PC-9 (cell line): ENCODE measurements at regions of chr10 and their contacts with region 1.

Region 1: DNA sequence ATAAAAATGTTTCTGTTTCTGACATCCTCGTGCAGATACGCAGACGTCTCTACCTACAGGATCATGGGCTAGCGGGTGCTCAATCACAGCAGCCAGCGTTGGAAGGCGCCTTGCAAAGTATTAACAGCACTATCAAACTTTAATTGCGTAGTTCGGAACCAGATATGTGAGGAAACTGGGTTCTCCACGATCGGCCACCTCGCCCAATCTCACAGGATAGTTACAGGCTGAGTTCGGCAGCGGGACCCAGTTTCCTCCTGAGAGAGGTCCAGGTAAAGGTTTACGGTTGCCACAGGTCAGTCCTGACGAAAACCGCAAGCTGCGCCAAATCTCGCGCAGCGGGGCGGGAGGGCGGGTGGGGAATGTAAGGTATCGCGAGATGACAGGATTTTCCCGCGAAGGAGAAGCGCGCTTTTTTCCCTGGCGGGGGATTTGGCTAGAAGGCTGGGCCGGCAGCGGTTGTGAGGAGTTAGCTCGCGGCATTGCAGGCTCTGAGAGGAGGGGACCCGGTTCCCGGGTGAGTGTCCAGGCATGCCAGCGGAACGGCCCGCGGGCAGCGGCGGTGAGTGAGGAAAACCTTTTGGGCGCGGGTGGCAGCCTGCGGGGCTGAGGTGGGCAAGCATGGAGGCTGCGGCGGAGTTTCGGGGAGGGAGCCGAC is at the start of gene HELLS:
- DNase-seq: peak; percentile 59 to 72
- H3K4me3 ChIP-seq: peak within 1 kb of the TSS; percentile 97
- H3K27ac ChIP-seq: peak within 1 kb of the TSS; percentile 78
- H3K4me1 ChIP-seq: peaks cover 22% of the 10 kb centered on the region
- H3K27me3 ChIP-seq: no peaks in the 10 kb centered on the region
- CTCF ChIP-seq: no peak
- total RNA-seq, gene HELLS: 50.8 and 64.4 TPM in 2 replicates

Region 2: DNA sequence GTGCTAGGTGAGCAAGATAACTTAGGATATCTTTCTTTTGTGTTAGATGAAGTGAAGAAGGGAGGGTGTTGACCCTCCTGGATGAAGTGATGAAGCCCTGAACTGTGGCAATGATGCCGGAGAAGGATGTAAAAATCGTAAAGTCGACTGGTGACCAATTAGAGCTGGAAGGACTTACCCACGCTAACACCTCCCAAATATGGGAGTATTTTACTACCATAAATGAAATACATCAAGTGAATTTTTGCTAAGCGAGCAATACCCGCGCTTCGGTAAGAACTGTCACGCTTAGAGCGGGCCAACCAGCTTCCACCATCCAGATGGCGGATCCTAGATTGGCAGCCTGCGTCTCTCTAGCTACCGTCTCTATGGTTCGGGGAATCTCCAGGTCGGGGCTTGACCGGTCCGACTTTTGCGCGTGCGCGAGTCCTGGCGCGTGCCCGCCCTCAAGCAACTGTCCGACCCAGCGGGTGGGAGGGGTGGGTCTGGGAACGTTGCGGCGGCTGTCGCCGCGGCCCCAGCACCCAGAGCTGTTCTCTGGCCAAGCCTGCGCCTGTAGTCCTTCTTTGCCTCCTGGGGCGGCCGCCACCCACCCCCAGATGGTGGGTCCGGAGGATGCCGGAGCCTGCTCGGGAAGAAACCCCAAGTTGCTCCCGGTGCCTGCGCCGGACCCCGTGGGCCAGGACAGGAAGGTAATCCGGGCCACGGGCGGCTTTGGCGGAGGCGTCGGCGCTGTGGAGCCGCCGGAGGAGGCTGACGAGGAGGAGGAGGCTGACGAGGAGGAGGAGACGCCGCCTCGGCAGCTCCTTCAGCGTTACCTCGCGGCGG is 143.3 kb before region 1 on chr10 and contains the start of gene TBC1D12:
- CTCF ChIA-PET with region 1: no interaction called
- POLR2A ChIA-PET with region 1: interaction called, 10 read pairs
- intact Hi-C with region 1: no loop called
- DNase-seq: peak; percentile 82 to 90
- H3K4me3 ChIP-seq: peak within 1 kb of the TSS; percentile 76
- H3K27ac ChIP-seq: peak within 1 kb of the TSS; percentile 56
- H3K4me1 ChIP-seq: peaks cover 23% of the 10 kb centered on the region; the same call in 1 of the 2 replicates
- H3K27me3 ChIP-seq: no peaks in the 10 kb centered on the region
- CTCF ChIP-seq: no peak
- total RNA-seq, gene TBC1D12: 3.1 and 3.9 TPM in 2 replicates